Transverse colon (tissue), 4 donors: ENCODE measurements at regions of chr7 and their contacts with region 1.

Region 1: GRCh38 chr7:94452239-94452638 is 57.4 kb upstream of the CASD1 start:
- DNase-seq: no peak
- H3K4me3 ChIP-seq: no peak overlapping the region
- H3K27ac ChIP-seq: no peak overlapping the region
- H3K4me1 ChIP-seq: peaks cover 0 to 13% (median 0%) of the 10 kb centered on the region in 4 donors
- H3K27me3 ChIP-seq: no peaks in the 10 kb centered on the region
- CTCF ChIP-seq: no peak
- EP300 ChIP-seq: no peak
- POLR2A ChIP-seq: no peak

Region 2: DNA sequence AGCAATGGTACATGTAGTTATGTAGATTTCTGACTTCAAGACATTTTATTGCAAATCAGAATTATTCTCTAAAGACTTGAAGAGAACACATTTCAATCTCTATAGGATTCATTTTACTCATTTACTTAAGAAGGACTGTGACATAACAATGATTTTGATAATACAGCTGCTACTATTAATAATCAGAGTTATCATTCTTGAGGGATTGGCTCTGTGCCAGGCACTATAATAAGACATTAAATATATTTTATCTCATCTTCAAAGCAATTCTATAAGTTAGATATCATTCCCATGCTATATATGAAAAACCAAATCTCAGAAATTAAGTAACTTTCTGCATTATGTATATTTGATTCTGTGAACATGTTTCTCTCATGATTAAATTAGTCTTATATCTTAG is 774.1 kb before region 1 on chr7:
- in situ Hi-C with region 1: no loop called
- intact Hi-C with region 1: no loop called
- DNase-seq: no peak
- H3K4me3 ChIP-seq: no peak overlapping the region
- H3K27ac ChIP-seq: no peak overlapping the region
- H3K4me1 ChIP-seq: no peaks in the 10 kb centered on the region
- H3K27me3 ChIP-seq: no peaks in the 10 kb centered on the region
- CTCF ChIP-seq: no peak
- EP300 ChIP-seq: no peak
- POLR2A ChIP-seq: no peak

Region 3: GRCh38 chr7:94395141-94396036 is 56.9 kb before region 1 on chr7:
- in situ Hi-C with region 1: no loop called
- intact Hi-C with region 1: no loop called
- DNase-seq: peak; percentile 30
- H3K4me3 ChIP-seq: peak overlapping the region; percentile 30 to 59 (median 46)
- H3K27ac ChIP-seq: peak overlapping the region; percentile 88 to 90 (median 89)
- H3K4me1 ChIP-seq: peaks cover 0 to 29% (median 4%) of the 10 kb centered on the region in 4 donors
- H3K27me3 ChIP-seq: peaks cover 15% of the 10 kb centered on the region
- CTCF ChIP-seq: peak; percentile 64 to 79 (median 72)
- EP300 ChIP-seq: no peak
- POLR2A ChIP-seq: no peak

Region 4: DNA sequence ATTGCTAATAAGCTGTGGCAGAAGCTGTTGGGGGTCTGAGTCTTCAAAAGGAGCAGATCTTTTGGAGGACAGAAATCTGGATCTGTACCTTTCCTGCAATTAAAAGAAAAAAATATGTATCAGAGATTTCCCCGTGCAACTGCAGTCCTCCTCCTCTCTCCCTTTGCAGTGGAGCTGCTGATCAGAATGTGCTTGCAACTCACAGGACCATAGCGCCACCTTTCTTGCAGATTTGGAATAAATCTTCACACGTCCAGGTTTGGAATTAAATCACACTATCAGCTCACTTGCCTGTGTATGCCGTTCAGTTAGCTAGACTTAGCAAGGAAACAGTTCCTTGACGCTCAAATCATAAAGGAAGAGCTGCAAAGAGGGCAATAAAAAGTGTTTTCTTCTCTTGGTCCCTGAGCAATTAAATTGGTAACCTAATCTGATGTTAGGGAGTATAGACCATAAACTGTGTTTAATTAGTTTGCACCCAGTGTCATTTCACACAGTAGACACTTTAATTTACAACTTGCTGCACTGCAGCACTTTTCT is 794.7 kb after region 1 on chr7:
- in situ Hi-C with region 1: loop called in 3 of 4 experiments (anchors 25 kb)
- intact Hi-C with region 1: no loop called
- DNase-seq: peak; percentile 52
- H3K4me3 ChIP-seq: no peak overlapping the region
- H3K27ac ChIP-seq: no peak overlapping the region
- H3K4me1 ChIP-seq: peaks cover 0 to 17% (median 10%) of the 10 kb centered on the region in 4 donors
- H3K27me3 ChIP-seq: no peaks in the 10 kb centered on the region
- CTCF ChIP-seq: peak; percentile 60 to 78 (median 69)
- EP300 ChIP-seq: no peak
- POLR2A ChIP-seq: no peak

Region 5: DNA sequence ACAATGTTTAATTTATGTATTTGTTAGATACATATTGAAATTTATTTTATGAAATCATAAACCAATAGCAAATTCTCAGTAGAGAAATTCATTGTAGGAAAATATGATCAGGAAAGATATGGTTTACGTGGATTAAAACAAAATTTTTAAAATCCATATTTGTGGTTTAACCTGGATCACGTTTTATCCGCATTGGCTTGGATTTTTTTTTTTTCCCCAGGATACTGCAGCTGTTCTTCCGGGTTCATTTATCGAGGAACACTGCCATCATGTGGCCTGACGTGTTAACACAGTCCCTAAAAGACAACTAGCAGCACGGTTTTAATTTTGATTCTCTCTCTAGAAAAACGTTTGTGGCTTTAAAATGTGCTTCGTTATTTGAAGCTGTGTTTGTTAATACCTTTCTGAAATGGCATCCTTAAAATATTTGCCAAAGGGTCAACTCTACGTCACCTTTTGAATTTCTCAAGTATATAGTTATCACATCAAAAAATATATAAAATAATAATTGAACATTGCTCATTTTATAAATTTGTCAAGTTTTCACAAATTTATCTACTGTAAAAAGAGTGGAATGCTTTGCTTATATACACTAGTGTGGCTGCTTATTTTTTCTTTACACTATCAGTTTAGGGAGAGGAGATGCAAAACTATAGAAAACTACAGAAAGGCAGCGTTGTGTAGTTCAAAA is 1024.8 kb after region 1 on chr7:
- in situ Hi-C with region 1: loop called in 2 of 4 experiments (anchors 25 kb)
- intact Hi-C with region 1: no loop called
- DNase-seq: peak; percentile 72
- H3K4me3 ChIP-seq: no peak overlapping the region
- H3K27ac ChIP-seq: no peak overlapping the region
- H3K4me1 ChIP-seq: peaks cover 0 to 8% (median 0%) of the 10 kb centered on the region in 4 donors
- H3K27me3 ChIP-seq: no peaks in the 10 kb centered on the region
- CTCF ChIP-seq: peak; percentile 69 to 85 (median 83)
- EP300 ChIP-seq: no peak
- POLR2A ChIP-seq: no peak